ENCODE measurements at regions of chr10 and their contacts with region 1.

Region 1: DNA sequence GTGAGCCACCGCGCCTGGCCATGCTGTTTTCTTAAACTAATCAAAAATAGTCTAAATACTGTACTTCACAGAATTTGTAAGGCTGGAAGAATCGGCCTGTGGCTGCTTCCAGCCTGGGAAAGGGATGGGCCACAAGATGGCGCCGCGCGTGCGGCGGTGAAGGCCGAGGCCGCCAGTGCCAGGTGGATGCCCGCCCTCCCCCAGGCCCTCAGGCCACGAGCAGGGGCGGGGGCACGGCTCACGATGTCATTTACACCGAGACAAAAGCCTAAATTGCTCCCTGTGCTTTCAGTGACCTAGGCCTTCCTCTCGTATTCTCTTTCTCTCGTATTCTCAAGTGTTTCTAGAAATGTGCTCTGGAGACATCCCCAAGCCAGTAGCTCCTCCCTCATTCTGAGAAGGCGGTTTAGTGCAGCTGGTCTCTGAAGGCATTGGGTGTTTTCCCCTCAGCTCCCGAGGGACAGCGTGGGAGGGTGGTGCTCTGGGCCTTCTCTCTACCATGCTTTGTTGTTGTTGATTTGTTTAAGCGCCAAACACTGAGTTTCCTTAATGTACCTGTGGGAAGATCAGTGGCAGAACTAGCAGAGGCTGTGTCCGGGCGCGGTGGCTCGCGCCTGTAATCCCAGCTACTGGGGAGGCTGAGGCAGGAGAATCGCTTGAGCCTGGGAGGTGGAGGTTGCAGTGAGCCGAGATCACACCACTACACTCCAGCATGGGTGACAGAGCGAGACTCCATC is 68.4 kb downstream of the CDC123 start:
- DNase-seq: peak; percentile 70
- ATAC-seq: peak; percentile 83
- H3K4me3 Mint-ChIP-seq: peak overlapping the region; percentile 59
- H3K27ac Mint-ChIP-seq: peak overlapping the region; percentile 40
- H3K4me1 Mint-ChIP-seq: peaks cover 25% of the 10 kb centered on the region
- H3K27me3 Mint-ChIP-seq: no peaks in the 10 kb centered on the region

Region 2: GRCh38 chr10:12484941-12485805 is 220.8 kb after region 1 on chr10:
- CTCF ChIA-PET with region 1: interaction called, 11 read pairs
- DNase-seq: no peak
- ATAC-seq: no peak
- H3K4me3 Mint-ChIP-seq: no peak overlapping the region
- H3K27ac Mint-ChIP-seq: no peak overlapping the region
- H3K4me1 Mint-ChIP-seq: peaks cover 9% of the 10 kb centered on the region
- H3K27me3 Mint-ChIP-seq: no peaks in the 10 kb centered on the region

Region 3: DNA sequence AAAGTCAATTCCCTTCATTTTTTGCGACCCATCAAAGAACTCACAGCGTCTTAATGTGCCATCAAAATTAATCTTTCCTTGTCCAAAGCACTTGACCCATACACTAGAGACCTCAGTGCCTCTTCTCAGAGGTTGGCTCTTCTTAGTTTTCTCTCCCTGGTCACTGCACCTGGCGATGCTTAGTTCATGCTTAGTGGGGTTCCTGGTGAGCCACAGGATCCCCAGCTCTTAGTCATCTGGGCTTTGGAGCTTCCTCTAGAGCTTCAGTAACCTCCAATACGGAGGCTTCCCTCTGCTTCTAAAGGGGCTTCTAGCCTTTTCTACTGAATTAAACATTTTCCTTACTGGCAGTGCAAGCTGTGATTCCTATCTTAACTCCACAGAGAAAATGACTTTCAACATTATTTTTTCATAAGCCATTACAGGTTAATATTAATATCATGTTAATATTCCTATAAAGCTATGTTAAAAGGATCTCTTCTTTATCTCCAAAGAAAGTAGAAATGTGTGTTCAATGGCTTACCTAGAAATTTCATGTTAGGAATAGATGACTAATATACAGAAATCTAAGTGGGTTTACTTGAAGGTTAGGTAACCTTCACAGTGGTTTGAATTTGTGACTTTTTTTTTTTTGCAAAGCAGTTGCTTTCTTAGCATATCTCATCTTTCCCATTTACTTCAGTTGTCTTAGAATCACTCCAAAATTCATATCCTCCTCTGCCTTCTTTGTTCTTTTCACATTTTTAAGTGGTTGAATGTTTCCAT is 380.2 kb after region 1 on chr10:
- CTCF ChIA-PET with region 1: interaction called, 10 read pairs
- DNase-seq: peak; percentile 54
- ATAC-seq: peak; percentile 51
- H3K4me3 Mint-ChIP-seq: no peak overlapping the region
- H3K27ac Mint-ChIP-seq: peak overlapping the region; percentile 38
- H3K4me1 Mint-ChIP-seq: peaks cover 19% of the 10 kb centered on the region
- H3K27me3 Mint-ChIP-seq: no peaks in the 10 kb centered on the region

Region 4: GRCh38 chr10:12656518-12657142 is 392.3 kb after region 1 on chr10:
- CTCF ChIA-PET with region 1: interaction called, 51 read pairs
- DNase-seq: no peak
- ATAC-seq: peak; percentile 82
- H3K4me3 Mint-ChIP-seq: no peak overlapping the region
- H3K27ac Mint-ChIP-seq: no peak overlapping the region
- H3K4me1 Mint-ChIP-seq: peaks cover 21% of the 10 kb centered on the region
- H3K27me3 Mint-ChIP-seq: no peaks in the 10 kb centered on the region

Region 5: GRCh38 chr10:12710594-12711349 is 446.4 kb after region 1 on chr10:
- CTCF ChIA-PET with region 1: interaction called, 24 read pairs
- DNase-seq: peak; percentile 86
- ATAC-seq: peak; percentile 92
- H3K4me3 Mint-ChIP-seq: no peak overlapping the region
- H3K27ac Mint-ChIP-seq: peak overlapping the region; percentile 67
- H3K4me1 Mint-ChIP-seq: peaks cover 51% of the 10 kb centered on the region
- H3K27me3 Mint-ChIP-seq: no peaks in the 10 kb centered on the region

Measured in activated CD8-positive, alpha-beta memory T cell treated with anti-CD3 and anti-CD28 coated beads, Interleukin-2, amount 10 ng/mL, durations not matched to agents 7 days and 5 days (primary cell).